ENCODE measurements at regions of chr10 and their contacts with region 1.

Region 1: DNA sequence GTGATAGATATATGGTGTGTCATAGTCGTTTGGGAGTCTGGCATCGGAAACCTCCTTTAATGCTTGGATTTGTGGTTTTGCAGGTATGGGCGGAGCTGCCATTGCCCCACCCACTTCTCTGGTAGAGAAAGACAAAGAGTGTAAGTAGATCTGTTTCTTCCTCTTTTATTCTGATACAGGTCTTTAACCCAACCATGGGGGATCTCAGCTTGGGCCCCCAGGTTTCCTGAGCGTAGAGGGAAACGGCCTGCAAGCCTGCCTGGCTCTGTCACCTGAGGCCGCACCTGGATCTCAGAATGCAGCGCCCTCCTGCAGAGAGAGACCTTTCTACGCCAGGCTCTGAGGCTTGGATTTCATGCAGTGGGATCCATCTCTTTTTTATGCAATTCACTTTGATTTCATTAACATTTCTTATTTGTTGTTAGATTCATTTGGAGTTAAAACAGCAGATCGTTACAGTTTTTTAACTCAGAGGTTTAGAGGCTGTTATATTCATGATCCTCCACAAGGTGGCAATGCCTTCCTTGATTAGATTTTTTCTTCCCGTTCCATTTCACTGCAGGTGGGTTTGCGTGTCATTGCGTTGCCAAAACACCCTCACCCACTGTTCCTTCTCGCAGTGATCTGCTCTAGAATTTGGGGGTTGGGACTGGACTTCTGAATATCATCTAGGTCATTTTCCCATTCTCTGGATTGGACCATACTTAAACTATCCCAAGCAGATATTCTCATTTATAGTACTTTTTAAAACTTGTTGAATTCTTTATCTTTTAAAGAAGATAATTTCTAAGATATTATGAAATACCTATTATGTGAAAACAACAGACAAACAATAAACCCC is 20.0 kb downstream of the RBM17 start:
- DNase-seq: no peak
- H3K4me3 Mint-ChIP-seq: no peak overlapping the region
- H3K27ac Mint-ChIP-seq: peak overlapping the region; percentile 77
- H3K4me1 Mint-ChIP-seq: peaks cover 30% of the 10 kb centered on the region
- H3K27me3 Mint-ChIP-seq: no peaks in the 10 kb centered on the region

Region 2: GRCh38 chr10:6151087-6151977 is 42.5 kb after region 1 on chr10:
- intact Hi-C with region 1: loop called (anchors 1 kb)
- DNase-seq: peak; percentile 48
- H3K4me3 Mint-ChIP-seq: no peak overlapping the region
- H3K27ac Mint-ChIP-seq: peak overlapping the region; percentile 40
- H3K4me1 Mint-ChIP-seq: peaks cover 43% of the 10 kb centered on the region
- H3K27me3 Mint-ChIP-seq: no peaks in the 10 kb centered on the region

Region 3: DNA sequence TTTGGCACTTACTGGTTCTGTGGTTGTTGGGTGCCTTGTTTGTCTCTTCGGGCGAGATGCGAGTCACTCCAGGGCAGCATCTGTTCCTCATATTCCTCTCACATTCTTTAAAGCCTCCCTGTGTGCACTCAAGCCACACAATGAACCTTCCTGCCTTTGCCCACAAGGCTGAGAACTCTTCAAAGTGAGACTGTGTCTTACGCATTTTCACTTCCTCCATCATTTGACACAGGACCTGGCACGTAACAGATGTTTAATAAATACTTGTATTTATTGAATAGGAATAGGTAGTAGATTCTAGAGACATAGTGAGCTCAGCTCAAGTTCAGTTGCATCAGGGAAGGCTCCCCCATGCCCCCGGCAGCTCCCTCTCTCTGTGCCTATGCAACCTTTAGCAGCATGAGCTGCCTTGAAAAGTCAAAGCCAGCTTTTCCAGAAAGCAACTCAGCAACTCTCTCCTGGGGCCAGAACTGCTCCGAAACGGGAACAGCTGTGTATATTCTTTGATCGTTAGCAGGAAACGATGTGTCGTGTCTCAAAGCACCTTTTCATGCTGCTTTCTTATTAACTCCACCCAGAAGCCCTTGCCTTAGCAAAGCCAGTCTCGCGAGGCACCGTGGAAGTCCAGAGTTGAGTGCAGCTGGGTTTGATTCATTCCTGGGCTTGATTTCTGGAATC is 191.4 kb after region 1 on chr10:
- intact Hi-C with region 1: no loop called
- DNase-seq: peak; percentile 15
- H3K4me3 Mint-ChIP-seq: peak overlapping the region; percentile 69
- H3K27ac Mint-ChIP-seq: peak overlapping the region; percentile 88
- H3K4me1 Mint-ChIP-seq: peaks cover 57% of the 10 kb centered on the region
- H3K27me3 Mint-ChIP-seq: no peaks in the 10 kb centered on the region

Measured in activated T-helper 2 cell treated with anti-CD3 and anti-CD28 coated beads, Interferon-gamma antibody, Interleukin-2, Interleukin-4, amounts not matched to agents 10 μg/mL and 5 μg/mL and 100 μg/mL, durations not matched to agents 14 hours and 24 hours and 36 hours (primary cell).